ENCODE measurements at regions of chr17 and their contacts with region 1.

Region 1: DNA sequence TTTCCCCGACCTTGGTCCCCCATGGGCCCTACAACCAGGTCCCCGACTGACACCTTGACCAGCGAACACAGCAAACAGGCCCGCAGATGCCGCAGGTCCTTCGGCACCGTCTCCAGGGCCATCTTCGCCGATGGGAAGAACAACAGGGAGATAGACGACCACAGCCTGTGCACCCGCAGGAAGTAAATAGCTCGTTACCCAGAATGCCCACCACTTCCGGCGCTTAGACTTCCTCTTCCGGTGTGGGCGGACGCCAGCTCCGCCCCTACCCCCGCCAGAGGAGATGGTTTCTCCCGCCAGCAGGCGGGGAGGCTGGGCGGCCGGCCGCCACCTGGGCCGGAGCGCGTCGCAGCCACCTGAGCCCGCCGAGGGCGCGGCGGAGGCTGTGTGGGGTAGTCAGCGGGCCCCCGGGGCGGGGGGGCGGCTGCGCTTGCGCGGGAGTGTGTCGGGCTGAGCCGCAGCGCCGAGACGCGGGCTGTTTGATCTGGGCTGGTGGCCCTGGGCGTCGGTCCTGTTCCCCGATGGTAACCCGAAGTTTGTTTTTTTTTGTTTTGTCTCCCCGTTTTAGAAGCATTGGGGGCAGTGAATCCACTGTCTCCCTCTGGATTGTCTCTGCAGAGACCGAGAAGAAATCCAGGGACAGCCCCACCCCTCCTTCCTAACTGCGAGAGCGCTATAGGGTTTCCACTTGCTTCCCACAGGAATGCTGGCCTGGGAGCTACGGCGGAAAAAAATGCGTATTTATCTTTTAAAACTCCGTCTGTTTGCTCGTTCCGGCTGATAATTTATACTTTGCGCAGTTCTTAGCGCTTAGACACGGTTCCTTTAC is at the start of gene SUPT4H1:
- DNase-seq: peak; percentile 73
- ATAC-seq: peak; percentile 96
- H3K4me3 ChIP-seq: peak within 1 kb of the TSS; percentile 94
- H3K27ac ChIP-seq: peak within 1 kb of the TSS; percentile 93
- H3K4me1 ChIP-seq: peaks cover 10% of the 10 kb centered on the region
- H3K27me3 ChIP-seq: no peaks in the 10 kb centered on the region
- CTCF ChIP-seq: no peak; a peak in 1 of 6 replicates
- EP300 ChIP-seq: peak in 1 of 2 experiments; percentile 43; a peak in 2 of 4 replicates
- POLR2A ChIP-seq: peak; percentile 91
- RAD21 ChIP-seq: peak; percentile 35; the same call in 1 of the 2 replicates
- polyA plus RNA-seq, gene SUPT4H1: 148 to 293 TPM

Region 2: GRCh38 chr17:58148609-58149008 is 203.6 kb before region 1 on chr17:
- CTCF ChIA-PET with region 1: no interaction called
- POLR2A ChIA-PET with region 1: no interaction called
- RAD21 ChIA-PET with region 1: no interaction called
- SMC1A ChIA-PET with region 1: no interaction called
- in situ Hi-C with region 1: no loop called
- intact Hi-C with region 1: no loop called
- DNase-seq: no peak
- ATAC-seq: no peak
- H3K4me3 ChIP-seq: no peak overlapping the region
- H3K27ac ChIP-seq: no peak overlapping the region
- H3K4me1 ChIP-seq: no peaks in the 10 kb centered on the region
- H3K27me3 ChIP-seq: peaks cover 2 to 7% of the 10 kb centered on the region in 2 experiments
- CTCF ChIP-seq: no peak
- EP300 ChIP-seq: no peak
- POLR2A ChIP-seq: no peak
- RAD21 ChIP-seq: no peak

Region 3: GRCh38 chr17:58329035-58329809 is 23.0 kb before region 1 on chr17:
- CTCF ChIA-PET with region 1: interaction called, 51 read pairs
- POLR2A ChIA-PET with region 1: interaction called, 219 read pairs
- RAD21 ChIA-PET with region 1: interaction called, 227 read pairs
- SMC1A ChIA-PET with region 1: interaction called, 249 read pairs
- in situ Hi-C with region 1: no loop called
- intact Hi-C with region 1: loop called (anchors 1 kb)
- DNase-seq: peak; percentile 97
- ATAC-seq: peak; percentile 51
- H3K4me3 ChIP-seq: peak overlapping the region; percentile 56; the same call in 1 of the 2 replicates
- H3K27ac ChIP-seq: peak overlapping the region; percentile 60
- H3K4me1 ChIP-seq: peaks cover 22% of the 10 kb centered on the region
- H3K27me3 ChIP-seq: no peaks in the 10 kb centered on the region; a peak in 1 of 4 replicates
- CTCF ChIP-seq: peak in 2 of 3 experiments; percentile 75 to 79; a peak in 4 of 6 replicates
- EP300 ChIP-seq: 0 out of 4 replicates have a peak, but pooled peaks of 1 of the 2 experiments have one; percentile 7
- POLR2A ChIP-seq: no peak
- RAD21 ChIP-seq: peak; percentile 44

Region 4: GRCh38 chr17:58337600-58338453 is 14.4 kb before region 1 on chr17:
- CTCF ChIA-PET with region 1: interaction called, 34 read pairs
- POLR2A ChIA-PET with region 1: interaction called, 219 read pairs
- RAD21 ChIA-PET with region 1: interaction called, 42 read pairs
- SMC1A ChIA-PET with region 1: interaction called, 143 read pairs
- in situ Hi-C with region 1: no loop called
- intact Hi-C with region 1: no loop called
- DNase-seq: peak; percentile 90
- ATAC-seq: peak; percentile 62
- H3K4me3 ChIP-seq: peak overlapping the region; percentile 83
- H3K27ac ChIP-seq: peak overlapping the region; percentile 100
- H3K4me1 ChIP-seq: peaks cover 59% of the 10 kb centered on the region
- H3K27me3 ChIP-seq: no peaks in the 10 kb centered on the region
- CTCF ChIP-seq: no peak
- EP300 ChIP-seq: peak; percentile 98
- POLR2A ChIP-seq: peak; percentile 82
- RAD21 ChIP-seq: peak; percentile 19; the same call in 1 of the 2 replicates